ENCODE measurements at regions of chr1 and their contacts with region 1.

Region 1: GRCh38 chr1:89843281-89844121 is 22.7 kb downstream of the LRRC8D start:
- DNase-seq: no peak
- H3K4me3 ChIP-seq: peak overlapping the region; percentile 64
- H3K27me3 ChIP-seq: no peaks in the 10 kb centered on the region
- CTCF ChIP-seq: peak; percentile 45; the same call in 1 of the 2 replicates

Region 2: DNA sequence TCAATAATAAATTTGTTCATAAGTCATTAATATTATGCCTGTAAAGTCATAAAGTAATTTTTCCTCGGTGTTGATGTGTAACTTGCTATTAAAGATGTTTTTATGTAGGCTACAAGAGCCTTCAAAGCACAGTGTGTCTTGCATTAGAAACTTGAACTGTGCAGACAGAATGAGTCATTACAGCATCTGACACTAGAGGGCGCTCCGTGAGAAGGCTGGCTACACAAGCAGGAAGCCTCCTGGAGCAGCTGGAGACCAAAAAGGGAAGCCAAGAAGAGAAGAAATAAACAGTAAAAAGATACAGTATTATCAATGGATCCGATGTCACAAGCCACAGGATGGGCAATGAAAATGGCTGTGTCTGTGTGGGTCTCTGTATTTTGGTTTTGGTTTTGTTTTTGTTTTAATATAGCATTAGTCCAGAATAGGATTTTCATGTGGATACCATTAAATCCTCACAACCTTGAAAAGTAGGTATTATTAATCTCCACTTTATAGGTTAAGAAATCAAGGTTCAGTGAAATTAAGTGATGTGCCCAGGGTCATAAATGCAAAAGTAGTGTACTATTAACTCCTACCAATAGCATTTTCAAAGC is 38.8 kb before region 1 on chr1:
- CTCF ChIA-PET with region 1: interaction called, 17 read pairs
- POLR2A ChIA-PET with region 1: interaction called, 4 read pairs
- DNase-seq: peak; percentile 44
- H3K4me3 ChIP-seq: no peak overlapping the region
- H3K27me3 ChIP-seq: no peaks in the 10 kb centered on the region; the same call in 1 of the 2 replicates
- CTCF ChIP-seq: peak; percentile 91

Region 3: DNA sequence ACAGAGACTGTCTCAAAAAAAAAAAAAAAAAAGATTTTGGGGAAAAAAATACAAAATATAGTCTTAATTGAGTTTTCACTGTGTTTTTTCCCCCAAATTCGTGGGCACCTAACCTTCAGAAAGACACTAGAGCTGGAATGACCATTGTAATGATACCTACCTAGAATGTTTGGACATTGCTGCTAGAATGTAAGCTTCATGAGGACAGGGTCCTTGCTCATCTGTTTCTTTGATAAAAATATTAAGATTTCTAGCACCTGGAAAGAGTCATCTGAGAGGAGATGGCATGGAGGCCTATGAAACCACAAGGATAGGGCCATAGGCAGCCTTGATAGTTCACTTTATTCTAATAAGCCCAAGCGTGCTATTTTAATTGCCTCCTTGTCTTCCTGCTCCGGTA is 16.2 kb before region 1 on chr1:
- CTCF ChIA-PET with region 1: interaction called, 18 read pairs
- POLR2A ChIA-PET with region 1: no interaction called
- DNase-seq: no peak
- H3K4me3 ChIP-seq: no peak overlapping the region
- H3K27me3 ChIP-seq: no peaks in the 10 kb centered on the region
- CTCF ChIP-seq: no peak

Region 4: GRCh38 chr1:89855413-89856123 is 12.1 kb after region 1 on chr1:
- CTCF ChIA-PET with region 1: interaction called, 13 read pairs
- POLR2A ChIA-PET with region 1: interaction called, 6 read pairs
- DNase-seq: no peak
- H3K4me3 ChIP-seq: no peak overlapping the region
- H3K27me3 ChIP-seq: no peaks in the 10 kb centered on the region
- CTCF ChIP-seq: no peak

Region 5: GRCh38 chr1:89910780-89911179 is 67.3 kb after region 1 on chr1:
- CTCF ChIA-PET with region 1: interaction called, 10 read pairs
- POLR2A ChIA-PET with region 1: no interaction called
- DNase-seq: peak; percentile 63
- H3K4me3 ChIP-seq: no peak overlapping the region
- H3K27me3 ChIP-seq: no peaks in the 10 kb centered on the region
- CTCF ChIP-seq: no peak

Region 6: GRCh38 chr1:89987170-89987819 is 143.8 kb after region 1 on chr1:
- CTCF ChIA-PET with region 1: interaction called, 21 read pairs
- POLR2A ChIA-PET with region 1: no interaction called
- DNase-seq: peak; percentile 37
- H3K4me3 ChIP-seq: no peak overlapping the region
- H3K27me3 ChIP-seq: no peaks in the 10 kb centered on the region
- CTCF ChIP-seq: peak; percentile 79